Panc1 (cell line): ENCODE measurements at regions of chr20 and their contacts with region 1.

Region 1: DNA sequence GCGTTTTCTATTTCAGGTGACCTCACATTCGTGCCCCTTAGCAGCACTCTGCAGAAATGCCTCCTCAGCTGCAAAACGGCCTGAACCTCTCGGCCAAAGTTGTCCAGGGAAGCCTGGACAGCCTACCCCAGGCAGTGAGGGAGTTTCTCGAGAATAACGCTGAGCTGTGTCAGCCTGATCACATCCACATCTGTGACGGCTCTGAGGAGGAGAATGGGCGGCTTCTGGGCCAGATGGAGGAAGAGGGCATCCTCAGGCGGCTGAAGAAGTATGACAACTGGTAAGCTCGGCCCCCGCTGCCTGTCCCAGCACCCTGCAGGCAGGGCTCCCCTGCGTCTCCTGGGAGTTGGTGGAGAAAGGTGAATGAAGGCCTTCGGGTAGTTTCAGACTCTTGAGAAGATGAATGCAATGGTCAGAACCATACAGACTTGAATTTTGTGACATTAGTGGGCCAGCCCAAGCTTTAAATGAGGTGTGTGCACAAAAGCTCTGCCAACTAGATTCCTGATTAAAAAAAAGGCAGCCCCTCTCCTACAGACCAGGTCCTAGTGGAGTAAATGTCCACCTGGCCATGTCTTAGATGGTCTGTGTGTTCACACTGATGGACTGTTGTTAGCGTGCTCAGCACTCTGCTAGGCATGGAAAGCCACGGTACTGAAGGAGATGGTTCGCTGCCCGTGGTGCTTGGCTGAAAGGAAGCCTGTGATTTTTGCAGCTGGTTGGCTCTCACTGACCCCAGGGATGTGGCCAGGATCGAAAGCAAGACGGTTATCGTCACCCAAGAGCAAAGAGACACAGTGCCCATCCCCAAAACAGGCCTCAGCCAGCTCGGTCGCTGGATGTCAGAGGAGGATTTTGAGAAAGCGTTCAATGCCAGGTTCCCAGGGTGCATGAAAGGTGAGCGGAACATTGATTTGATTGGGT is 708 bp downstream of the PCK1 start:
- DNase-seq: no peak
- ATAC-seq: no peak
- H3K4me3 ChIP-seq: no peak overlapping the region
- H3K27ac ChIP-seq: no peak overlapping the region
- H3K4me1 ChIP-seq: no peaks in the 10 kb centered on the region
- H3K27me3 ChIP-seq: peaks cover 16% of the 10 kb centered on the region
- CTCF ChIP-seq: no peak

Region 2: DNA sequence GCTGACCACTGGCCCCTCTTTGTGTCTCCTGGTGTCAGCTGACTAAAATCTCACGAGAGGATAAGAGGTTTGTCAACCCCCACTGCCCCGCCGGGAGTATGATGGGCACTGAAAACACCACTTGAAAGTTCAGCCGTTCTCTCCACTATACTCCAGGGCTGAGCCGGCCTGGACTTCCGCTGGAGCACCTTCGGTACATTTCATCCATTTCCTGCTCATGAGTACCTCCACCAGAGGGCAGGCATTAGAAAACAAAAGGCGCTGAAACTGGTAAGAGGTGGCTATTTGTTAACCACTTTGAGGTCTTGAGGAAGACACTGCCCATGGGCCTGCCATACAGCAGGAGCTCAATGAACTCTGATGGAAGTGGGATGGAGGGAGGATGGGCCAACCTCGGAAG is 684.7 kb after region 1 on chr20:
- CTCF ChIA-PET with region 1: interaction called, 11 read pairs
- POLR2A ChIA-PET with region 1: no interaction called
- in situ Hi-C with region 1: no loop called
- intact Hi-C with region 1: no loop called
- DNase-seq: no peak
- ATAC-seq: peak; percentile 56; the same call in 1 of the 2 replicates
- H3K4me3 ChIP-seq: no peak overlapping the region
- H3K27ac ChIP-seq: no peak overlapping the region
- H3K4me1 ChIP-seq: no peaks in the 10 kb centered on the region
- H3K27me3 ChIP-seq: no peaks in the 10 kb centered on the region
- CTCF ChIP-seq: peak; percentile 53